ENCODE measurements at regions of chr7 and their contacts with region 1.

Region 1: DNA sequence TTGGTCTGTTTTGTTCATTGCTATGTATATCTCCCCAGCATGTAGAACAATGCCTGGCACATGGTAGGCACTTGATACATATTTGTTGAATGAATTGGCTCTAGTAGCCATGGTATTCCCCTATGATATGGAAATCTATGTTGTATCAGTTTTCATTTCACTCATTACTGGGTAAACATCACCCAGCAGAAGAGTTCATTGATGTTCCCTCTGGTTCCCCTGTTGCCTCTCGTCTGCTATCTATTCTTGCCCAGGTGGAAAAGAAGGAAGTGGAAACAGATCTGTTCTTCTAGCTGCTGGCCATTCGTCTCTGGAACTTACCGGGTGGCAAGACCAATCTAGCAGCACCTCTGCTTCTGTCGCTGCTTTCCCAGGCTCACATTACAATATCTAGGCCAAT is 71.5 kb downstream of the LRRC4 start:
- DNase-seq: no peak
- H3K4me3 ChIP-seq: no peak overlapping the region
- H3K27ac ChIP-seq: no peak overlapping the region
- H3K4me1 ChIP-seq: peaks cover 0 to 22% (median 5%) of the 10 kb centered on the region in 4 donors
- H3K27me3 ChIP-seq: no peaks in the 10 kb centered on the region
- CTCF ChIP-seq: no peak
- EP300 ChIP-seq: no peak
- POLR2A ChIP-seq: no peak

Region 2: DNA sequence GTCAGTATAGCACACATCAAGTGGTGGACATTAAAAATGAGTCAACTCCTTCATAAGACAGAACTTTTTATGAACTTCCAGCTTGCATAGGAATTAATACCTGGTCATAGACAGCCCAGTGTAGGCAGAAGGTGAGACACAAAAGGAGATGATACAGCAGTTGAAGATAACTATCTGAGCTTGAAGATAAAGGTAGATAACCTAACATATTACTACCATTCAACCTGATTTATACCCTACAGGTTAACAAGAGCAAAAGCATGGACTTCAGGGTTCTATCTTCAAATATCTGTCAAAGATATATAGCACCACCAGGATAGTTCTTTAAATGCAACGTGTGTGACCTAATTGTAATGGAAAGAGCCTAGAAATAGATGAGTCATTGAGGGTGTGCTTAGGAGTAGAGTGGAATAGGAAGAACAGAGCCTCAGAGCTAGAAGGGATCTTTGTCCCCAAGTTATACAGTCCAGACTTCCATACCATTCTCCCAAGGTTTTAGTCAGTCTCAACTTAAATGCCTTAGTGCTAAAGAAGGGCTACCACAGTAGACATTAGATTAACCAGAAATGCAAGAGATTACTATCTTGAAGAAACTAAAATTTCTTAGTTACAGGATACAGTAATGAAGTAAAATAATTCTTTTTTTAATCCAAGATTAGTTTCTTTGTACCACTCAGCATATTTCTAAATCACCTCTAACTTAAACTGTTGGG is 576.5 kb before region 1 on chr7:
- intact Hi-C with region 1: no loop called
- DNase-seq: no peak
- H3K4me3 ChIP-seq: no peak overlapping the region
- H3K27ac ChIP-seq: no peak overlapping the region
- H3K4me1 ChIP-seq: peaks cover 0 to 13% (median 7%) of the 10 kb centered on the region in 4 donors
- H3K27me3 ChIP-seq: no peaks in the 10 kb centered on the region
- CTCF ChIP-seq: no peak
- EP300 ChIP-seq: no peak
- POLR2A ChIP-seq: no peak

Region 3: DNA sequence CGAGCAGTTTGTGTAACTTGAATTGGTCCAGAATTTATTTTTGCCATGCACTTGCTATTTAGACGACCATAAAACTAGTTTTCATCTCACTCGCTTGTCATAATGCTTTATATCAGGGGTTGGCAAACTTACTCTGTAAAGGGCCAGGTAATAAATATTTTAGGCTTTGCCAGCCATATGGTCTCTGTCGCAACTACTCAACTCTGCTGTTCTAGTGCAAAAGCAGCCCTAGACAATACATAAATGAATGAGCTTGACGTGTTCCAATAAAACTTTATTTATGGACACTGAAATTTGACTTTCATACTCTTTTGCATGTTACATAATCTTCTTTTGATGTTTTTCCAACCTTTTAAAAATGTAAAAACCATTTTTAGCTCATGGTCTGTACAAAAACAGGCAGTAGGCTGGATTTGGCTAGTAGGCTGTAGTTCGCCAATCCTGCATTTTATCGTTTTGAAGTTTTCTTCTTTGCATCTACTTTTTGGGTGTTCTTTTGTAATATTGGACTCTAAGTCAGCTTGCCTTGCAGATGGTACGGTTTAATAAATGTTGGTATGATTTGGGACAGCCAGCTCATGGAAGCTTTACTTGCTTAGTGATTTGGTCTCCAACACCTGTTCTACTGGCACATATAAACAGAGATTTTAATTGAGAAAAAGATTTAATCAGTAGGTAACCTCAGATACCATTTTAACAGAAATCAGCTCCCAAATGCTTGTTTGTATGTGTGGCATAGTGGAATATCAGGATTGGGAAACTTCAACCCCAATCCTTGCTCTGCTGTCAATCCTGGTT is 282.1 kb before region 1 on chr7:
- intact Hi-C with region 1: loop called (anchors 1 kb)
- DNase-seq: peak; percentile 68
- H3K4me3 ChIP-seq: no peak overlapping the region
- H3K27ac ChIP-seq: peak overlapping the region in 3 of 4 donors; percentile 10 to 56 (median 48)
- H3K4me1 ChIP-seq: peaks cover 0 to 45% (median 28%) of the 10 kb centered on the region in 4 donors
- H3K27me3 ChIP-seq: no peaks in the 10 kb centered on the region
- CTCF ChIP-seq: no peak
- EP300 ChIP-seq: peak in 3 of 4 donors; percentile 7 to 28 (median 10)
- POLR2A ChIP-seq: no peak

Region 4: DNA sequence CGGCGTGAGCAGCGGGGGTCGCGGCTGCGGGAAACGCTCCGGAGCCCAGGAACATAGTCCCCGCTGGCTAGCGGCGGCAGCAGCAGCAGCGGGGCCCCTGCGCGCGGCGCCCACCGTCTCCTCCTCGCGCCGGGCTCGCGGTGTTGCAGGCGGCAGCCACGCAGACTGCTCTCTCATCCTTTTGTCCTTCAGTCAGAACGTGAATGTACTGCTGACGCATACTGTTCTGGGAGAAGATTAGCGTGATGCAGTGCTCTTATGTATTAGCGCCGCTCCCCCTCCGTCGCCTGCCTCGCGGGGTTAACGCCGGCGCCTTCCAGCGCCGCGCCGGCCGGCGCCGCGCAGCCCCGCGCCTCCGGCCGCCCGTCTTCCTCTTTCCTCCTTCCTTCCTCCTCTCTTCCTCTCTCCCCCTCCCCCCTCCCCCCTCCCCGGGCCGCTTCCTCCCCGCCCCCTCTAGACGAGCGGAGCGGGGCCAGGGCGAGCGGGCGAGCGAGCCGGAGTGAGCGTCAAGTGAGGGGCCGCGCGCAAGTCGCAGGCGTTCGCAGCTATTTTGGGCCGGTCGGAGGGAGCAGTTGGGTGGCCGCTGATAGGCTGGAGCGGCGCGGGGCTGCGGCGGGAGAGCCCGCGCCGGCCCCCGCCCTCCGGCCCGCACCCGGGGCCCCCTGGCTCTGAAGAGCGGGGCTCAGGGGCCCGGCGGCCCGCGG is 72.3 kb after region 1 on chr7:
- intact Hi-C with region 1: loop called (anchors 5 kb)
- DNase-seq: peak; percentile 73
- H3K4me3 ChIP-seq: peak overlapping the region; percentile 35 to 62 (median 54)
- H3K27ac ChIP-seq: peak overlapping the region in 2 of 4 donors; percentile 57 to 62
- H3K4me1 ChIP-seq: peaks cover 3 to 29% (median 17%) of the 10 kb centered on the region in 4 donors
- H3K27me3 ChIP-seq: no peaks in the 10 kb centered on the region
- CTCF ChIP-seq: peak in 1 of 4 experiments; percentile 25
- EP300 ChIP-seq: no peak
- POLR2A ChIP-seq: no peak